Right ventricle myocardium superior (tissue), 1 donor: ENCODE measurements at regions of chr19 and their contacts with region 1.

Region 1: GRCh38 chr19:34269968-34270621 is 15.7 kb downstream of the GARRE1 start:
- DNase-seq: peak; percentile 70
- ATAC-seq: peak; percentile 70

Region 2: GRCh38 chr19:34319785-34320184 is 49.7 kb after region 1 on chr19:
- intact Hi-C with region 1: loop called (anchors 10 kb)
- DNase-seq: no peak
- ATAC-seq: no peak

Region 3: DNA sequence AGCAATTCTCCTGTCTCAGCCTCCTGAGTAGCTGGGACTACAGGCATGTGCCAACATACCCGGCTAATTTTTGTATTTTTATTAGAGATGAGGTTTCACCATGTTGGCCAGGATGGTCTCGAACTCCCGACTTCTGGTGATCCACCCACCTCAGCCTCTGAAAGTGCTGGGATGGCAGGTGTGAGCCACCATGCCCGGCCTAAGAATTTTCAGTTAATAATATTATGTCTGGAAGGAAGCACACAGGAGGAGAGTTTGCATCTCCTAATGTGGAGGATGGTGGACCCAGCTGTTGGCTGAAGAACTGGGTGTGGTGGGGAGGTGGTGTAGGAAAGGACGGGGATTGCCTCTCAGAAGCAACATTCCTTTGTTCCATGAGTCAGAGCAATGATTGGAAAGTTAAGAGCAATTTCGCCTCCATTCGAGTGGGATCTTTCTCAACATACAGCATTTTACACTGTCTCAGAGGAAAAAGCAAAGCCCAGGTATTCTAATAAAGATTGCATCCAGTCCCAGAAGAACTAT is 146.0 kb after region 1 on chr19:
- intact Hi-C with region 1: no loop called
- DNase-seq: no peak
- ATAC-seq: no peak